ENCODE measurements at regions of chr19 and their contacts with region 1.

Region 1: GRCh38 chr19:18328340-18329034 is 5.6 kb upstream of the LSM4 start:
- DNase-seq: peak; percentile 86
- H3K4me3 Mint-ChIP-seq: peak overlapping the region; percentile 31
- H3K27ac Mint-ChIP-seq: peak overlapping the region; percentile 63
- H3K4me1 Mint-ChIP-seq: peaks cover 19% of the 10 kb centered on the region
- H3K27me3 Mint-ChIP-seq: no peaks in the 10 kb centered on the region

Region 2: GRCh38 chr19:17336872-17337722 is 991.4 kb before region 1 on chr19 and contains the start of gene GTPBP3:
- intact Hi-C with region 1: no loop called
- DNase-seq: peak; percentile 95
- H3K4me3 Mint-ChIP-seq: peak within 1 kb of the TSS; percentile 87
- H3K27ac Mint-ChIP-seq: peak within 1 kb of the TSS; percentile 88
- H3K4me1 Mint-ChIP-seq: peaks cover 21% of the 10 kb centered on the region
- H3K27me3 Mint-ChIP-seq: peaks cover 2% of the 10 kb centered on the region
- total RNA-seq, gene GTPBP3: 64.2 and 72.0 TPM in 2 replicates

Region 3: DNA sequence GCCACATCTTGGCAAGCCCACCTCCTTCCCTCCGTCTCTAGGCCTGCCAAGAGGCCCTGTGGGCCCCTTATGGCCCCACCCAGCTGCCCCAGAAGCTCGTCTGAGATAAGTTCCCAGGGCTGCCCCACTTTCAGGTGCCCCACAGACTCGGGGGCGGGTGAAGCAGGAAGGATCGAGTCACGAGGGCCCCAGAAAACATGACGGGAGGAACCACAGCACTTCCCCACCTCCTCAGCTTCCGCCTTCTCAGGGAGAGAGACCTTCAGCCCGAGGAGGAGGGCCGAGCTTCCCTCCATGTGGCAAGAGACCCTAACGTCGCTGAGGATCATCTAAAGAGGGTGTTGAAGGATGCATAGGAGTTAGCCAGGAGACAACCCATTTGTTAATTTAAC is 237.3 kb before region 1 on chr19:
- intact Hi-C with region 1: no loop called
- DNase-seq: peak; percentile 77
- H3K4me3 Mint-ChIP-seq: peak overlapping the region; percentile 69
- H3K27ac Mint-ChIP-seq: peak overlapping the region; percentile 94
- H3K4me1 Mint-ChIP-seq: peaks cover 53% of the 10 kb centered on the region
- H3K27me3 Mint-ChIP-seq: no peaks in the 10 kb centered on the region

Region 4: DNA sequence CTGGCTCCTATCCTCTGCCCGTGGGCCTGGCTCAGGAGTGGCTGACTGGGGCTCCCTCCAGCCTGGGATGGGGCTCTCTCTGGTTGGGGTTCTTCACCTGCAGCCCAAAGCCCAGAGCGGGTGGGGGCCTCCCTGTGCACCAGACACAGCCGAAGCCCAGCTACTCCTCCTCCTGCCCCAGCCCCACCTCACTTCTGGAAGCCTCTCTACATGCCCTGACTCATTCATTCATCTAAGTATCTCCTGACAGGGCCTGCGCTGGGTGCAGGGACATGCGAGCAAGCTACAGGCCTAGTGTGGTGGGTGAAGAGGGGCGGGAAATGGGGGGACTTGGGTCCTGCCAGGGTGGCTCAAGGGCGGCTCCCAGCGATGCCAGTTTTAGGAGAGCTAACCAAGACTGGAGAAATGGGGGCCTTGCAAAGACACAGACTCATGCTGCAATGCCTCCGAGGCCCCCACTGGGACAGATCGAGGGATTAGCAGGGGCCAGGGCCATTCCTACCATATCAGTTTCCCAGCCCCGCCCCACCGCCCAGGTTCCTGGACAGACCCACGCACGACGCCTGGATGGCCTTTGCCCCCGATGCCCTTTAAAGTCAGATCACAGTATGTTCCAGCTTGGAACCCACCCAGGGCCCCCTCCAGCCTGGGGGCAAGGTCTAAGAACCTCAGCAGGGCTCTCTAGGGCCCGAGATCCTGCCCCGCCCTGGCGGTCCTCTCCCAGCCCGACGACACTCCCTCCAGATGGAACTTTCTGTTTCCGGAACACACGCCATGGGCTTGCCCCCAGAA is 18.2 kb before region 1 on chr19:
- intact Hi-C with region 1: no loop called
- DNase-seq: no peak
- H3K4me3 Mint-ChIP-seq: no peak overlapping the region
- H3K27ac Mint-ChIP-seq: no peak overlapping the region
- H3K4me1 Mint-ChIP-seq: peaks cover 20% of the 10 kb centered on the region
- H3K27me3 Mint-ChIP-seq: no peaks in the 10 kb centered on the region

Region 5: GRCh38 chr19:18340190-18340989 is 11.9 kb after region 1 on chr19 and contains the start of gene PGPEP1:
- intact Hi-C with region 1: loop called (anchors 1 kb)
- DNase-seq: peak; percentile 62
- H3K4me3 Mint-ChIP-seq: peak within 1 kb of the TSS; percentile 90
- H3K27ac Mint-ChIP-seq: peak within 1 kb of the TSS; percentile 86
- H3K4me1 Mint-ChIP-seq: peaks cover 11% of the 10 kb centered on the region
- H3K27me3 Mint-ChIP-seq: peaks cover 2% of the 10 kb centered on the region
- total RNA-seq, gene PGPEP1: 17.9 and 21.5 TPM in 2 replicates

Region 6: DNA sequence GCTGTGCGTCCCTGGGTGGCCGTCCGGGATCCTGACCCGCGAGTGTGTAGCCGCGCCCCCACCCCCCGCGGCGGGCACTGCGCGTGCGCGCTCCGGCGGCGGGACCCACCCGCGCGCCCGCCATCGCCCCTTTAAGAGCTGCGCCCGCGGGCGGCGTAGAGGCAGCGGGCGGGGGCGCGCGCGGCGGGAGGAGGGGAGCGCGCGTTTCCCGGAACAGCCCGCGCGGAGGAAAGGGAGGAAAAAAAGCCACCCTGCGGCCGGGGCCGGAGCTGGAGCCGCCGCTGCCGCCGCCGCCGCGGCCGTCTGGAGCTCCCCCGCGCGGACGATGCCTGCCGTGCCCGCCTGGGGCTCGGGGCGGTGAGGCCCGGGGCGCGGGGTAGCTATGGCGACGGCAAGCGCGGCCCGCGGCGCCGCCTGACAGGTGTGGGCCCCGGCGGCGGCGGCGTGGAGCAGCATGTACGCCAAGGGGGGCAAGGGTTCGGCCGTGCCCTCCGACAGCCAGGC is 90.8 kb after region 1 on chr19 and contains the start of gene SSBP4:
- intact Hi-C with region 1: no loop called
- DNase-seq: peak; percentile 75
- H3K4me3 Mint-ChIP-seq: peak within 1 kb of the TSS; percentile 89
- H3K27ac Mint-ChIP-seq: peak within 1 kb of the TSS; percentile 82
- H3K4me1 Mint-ChIP-seq: peaks cover 78% of the 10 kb centered on the region
- H3K27me3 Mint-ChIP-seq: peaks cover 5% of the 10 kb centered on the region
- total RNA-seq, gene SSBP4: 135 and 141 TPM in 2 replicates

Measured in activated T-helper 1 cell treated with anti-CD3 and anti-CD28 coated beads, Interleukin-12 subunit alpha, Interleukin-12 subunit beta, Interleukin-2, Interleukin-4 antibody, amounts not matched to agents 30 ng/mL and 10 ng/mL and 1 ng/mL, durations not matched to agents 14 hours and 24 hours and 36 hours (primary cell).